ENCODE measurements at regions of chr4 and their contacts with region 1.

Region 1: GRCh38 chr4:87235020-87235671 is 14.7 kb upstream of the KLHL8 start:
- DNase-seq: no peak
- H3K4me3 ChIP-seq: peak overlapping the region; percentile 46 to 56 (median 52)
- H3K27ac ChIP-seq: peak overlapping the region in 1 of 4 donors; percentile 43
- H3K4me1 ChIP-seq: peaks cover 0 to 12% (median 5%) of the 10 kb centered on the region in 4 donors
- H3K27me3 ChIP-seq: no peaks in the 10 kb centered on the region
- CTCF ChIP-seq: no peak
- EP300 ChIP-seq: no peak
- POLR2A ChIP-seq: no peak

Region 2: DNA sequence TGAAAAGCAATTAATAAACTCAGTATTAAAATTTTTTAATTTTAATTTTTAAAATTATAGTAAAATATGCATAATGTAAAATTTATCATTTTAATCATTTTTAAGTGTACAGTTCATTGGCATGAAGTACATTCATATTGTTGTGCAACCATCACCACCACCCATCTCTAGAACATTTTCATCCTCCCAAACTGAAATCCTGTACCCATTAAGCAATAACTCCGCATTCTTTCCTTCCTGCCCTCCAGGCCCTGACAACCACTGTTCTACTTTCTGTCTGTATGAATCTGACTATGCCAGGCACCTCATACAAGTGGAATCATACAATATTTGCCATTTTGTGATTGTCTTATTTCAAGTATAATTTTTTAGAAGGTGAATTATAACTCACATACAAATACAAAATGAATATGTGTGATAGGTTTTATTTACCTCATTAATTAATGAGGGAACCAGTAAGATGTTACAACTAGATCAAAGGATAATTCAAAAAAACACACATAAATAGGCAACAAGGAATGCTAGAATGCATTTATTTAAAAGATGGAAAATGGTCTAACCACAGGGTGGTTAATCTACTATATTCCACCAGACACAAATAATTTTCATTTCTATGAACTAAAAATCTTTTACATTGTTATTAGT is 313.4 kb before region 1 on chr4:
- intact Hi-C with region 1: loop called (anchors 2 kb)
- DNase-seq: no peak
- H3K4me3 ChIP-seq: no peak overlapping the region
- H3K27ac ChIP-seq: no peak overlapping the region
- H3K4me1 ChIP-seq: peaks cover 0 to 8% (median 3%) of the 10 kb centered on the region in 4 donors
- H3K27me3 ChIP-seq: no peaks in the 10 kb centered on the region
- CTCF ChIP-seq: no peak
- EP300 ChIP-seq: no peak
- POLR2A ChIP-seq: no peak

Region 3: DNA sequence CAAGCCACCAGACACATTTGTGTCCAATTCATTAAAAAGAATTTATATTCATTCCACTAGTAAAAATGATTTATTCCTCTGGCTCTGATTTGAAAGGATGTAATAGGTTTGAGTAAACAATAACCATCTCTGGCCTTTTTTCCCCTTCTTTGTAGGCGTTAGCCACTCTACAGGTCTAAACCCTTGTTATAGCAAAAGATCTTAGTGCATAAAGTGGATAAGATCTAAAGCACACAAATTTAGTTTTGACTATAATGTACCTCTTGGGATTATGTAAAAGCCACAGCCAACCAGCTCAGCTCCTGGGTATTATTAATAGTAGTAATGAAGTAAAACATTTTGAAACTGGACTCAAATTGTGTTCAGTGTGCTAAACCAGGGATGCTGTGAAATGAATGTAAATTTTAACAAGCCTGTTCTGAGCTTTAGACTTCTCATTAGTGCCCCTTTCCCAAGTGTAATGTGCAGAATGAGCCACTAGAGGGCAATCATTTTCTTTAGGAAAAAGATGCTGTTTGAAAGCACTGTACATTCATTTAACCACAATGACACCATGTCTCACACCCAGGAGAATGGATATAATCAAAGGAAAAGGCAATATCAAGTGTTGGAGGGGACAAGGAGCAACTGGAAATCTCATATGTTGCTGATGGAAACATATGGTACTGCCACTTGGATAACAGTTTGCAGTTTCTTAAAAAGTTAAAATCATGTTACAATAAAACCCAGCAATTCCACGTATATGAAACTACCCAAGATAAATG is 84.5 kb before region 1 on chr4:
- intact Hi-C with region 1: loop called (anchors 2 kb)
- DNase-seq: no peak
- H3K4me3 ChIP-seq: no peak overlapping the region
- H3K27ac ChIP-seq: no peak overlapping the region
- H3K4me1 ChIP-seq: peaks cover 0 to 10% (median 3%) of the 10 kb centered on the region in 4 donors
- H3K27me3 ChIP-seq: no peaks in the 10 kb centered on the region
- CTCF ChIP-seq: peak in 2 of 3 experiments; percentile 87 to 94
- EP300 ChIP-seq: no peak
- POLR2A ChIP-seq: no peak

Region 4: DNA sequence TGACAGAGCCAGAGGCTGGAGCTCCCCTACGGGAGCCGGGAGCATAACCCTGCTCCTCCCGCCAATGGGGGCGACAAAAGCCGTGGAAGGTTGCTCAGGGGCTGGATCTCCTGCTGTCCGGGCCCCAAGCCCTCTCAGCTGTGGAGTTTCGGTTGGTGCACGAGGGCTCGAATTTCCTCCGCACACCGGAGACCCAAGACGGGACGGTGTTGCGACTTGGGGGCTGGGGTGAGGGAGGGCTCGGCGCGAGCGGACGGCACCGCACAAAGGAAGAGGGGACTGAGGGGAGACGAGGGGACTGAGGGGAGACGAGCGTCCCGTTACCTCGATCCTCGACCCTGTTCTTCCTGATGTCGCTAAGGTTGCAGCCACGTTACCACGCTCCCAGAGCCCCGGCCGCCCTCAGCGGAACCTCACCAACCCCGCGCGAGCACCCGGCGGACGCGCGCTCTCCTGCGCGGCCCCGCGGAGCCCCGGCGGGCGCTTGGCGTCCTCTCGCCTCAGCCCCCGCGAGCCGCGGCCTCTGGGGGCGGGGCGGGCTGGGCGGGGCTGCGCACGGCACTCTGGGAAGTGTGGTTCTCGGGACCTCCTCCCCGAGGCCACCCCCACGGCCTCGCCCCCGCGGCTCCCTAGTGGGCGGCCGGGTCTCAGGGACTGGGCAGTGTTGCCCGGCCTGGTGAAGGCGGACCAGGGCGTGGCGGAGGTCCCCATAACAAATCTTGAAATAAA is 14.9 kb before region 1 on chr4 and contains the start of gene KLHL8:
- intact Hi-C with region 1: no loop called
- DNase-seq: peak; percentile 94
- H3K4me3 ChIP-seq: peak within 1 kb of the TSS; percentile 68 to 99 (median 96)
- H3K27ac ChIP-seq: peak within 1 kb of the TSS; percentile 89 to 95 (median 93)
- H3K4me1 ChIP-seq: peaks cover 7 to 18% (median 16%) of the 10 kb centered on the region in 4 donors
- H3K27me3 ChIP-seq: no peaks in the 10 kb centered on the region
- CTCF ChIP-seq: no peak
- EP300 ChIP-seq: no peak
- POLR2A ChIP-seq: no peak
- total RNA-seq, gene KLHL8: 7.6 to 18.7 (median 11.7) TPM

Measured in esophagus muscularis mucosa (tissue), 4 donors.